ENCODE measurements at regions of chr12 and their contacts with region 1.

Region 1: GRCh38 chr12:15629108-15629507 is 160.1 kb downstream of the EPS8 start:
- DNase-seq: peak; percentile 88 to 95
- H3K4me3 ChIP-seq: no peak overlapping the region
- H3K4me3 Mint-ChIP-seq: peak overlapping the region; percentile 41
- H3K27ac Mint-ChIP-seq: peak overlapping the region; percentile 82
- H3K4me1 ChIP-seq: peaks cover 32% of the 10 kb centered on the region
- H3K4me1 Mint-ChIP-seq: peaks cover 41% of the 10 kb centered on the region
- H3K27me3 ChIP-seq: no peaks in the 10 kb centered on the region
- H3K27me3 Mint-ChIP-seq: no peaks in the 10 kb centered on the region
- CTCF ChIP-seq: no peak

Region 2: GRCh38 chr12:15599266-15600037 is 29.7 kb before region 1 on chr12:
- CTCF ChIA-PET with region 1: no interaction called
- POLR2A ChIA-PET with region 1: no interaction called
- intact Hi-C with region 1: no loop called
- DNase-seq: no peak
- H3K4me3 ChIP-seq: no peak overlapping the region
- H3K4me3 Mint-ChIP-seq: no peak overlapping the region
- H3K27ac Mint-ChIP-seq: no peak overlapping the region
- H3K4me1 ChIP-seq: no peaks in the 10 kb centered on the region
- H3K4me1 Mint-ChIP-seq: peaks cover 6% of the 10 kb centered on the region
- H3K27me3 ChIP-seq: no peaks in the 10 kb centered on the region
- H3K27me3 Mint-ChIP-seq: no peaks in the 10 kb centered on the region
- CTCF ChIP-seq: no peak

Region 3: DNA sequence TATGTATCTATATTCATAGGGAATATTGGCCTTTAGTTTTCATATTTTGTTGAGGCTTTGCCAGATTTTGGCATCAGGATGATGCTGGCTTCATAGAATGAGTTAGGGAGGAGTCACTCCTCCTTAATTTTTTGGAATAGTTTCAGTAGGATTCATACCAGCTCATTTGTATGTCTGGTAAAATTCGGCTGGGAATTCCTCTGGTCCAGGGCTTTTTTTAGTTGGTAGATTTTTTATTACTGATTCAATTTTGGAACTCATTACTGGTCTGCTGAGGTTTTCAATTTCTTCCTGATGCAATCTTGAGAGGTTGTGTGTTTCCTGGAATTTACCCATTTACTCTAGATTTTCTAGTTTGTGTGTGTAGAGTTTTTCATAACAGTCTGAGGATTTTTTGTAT is 15.1 kb before region 1 on chr12:
- CTCF ChIA-PET with region 1: no interaction called
- POLR2A ChIA-PET with region 1: no interaction called
- intact Hi-C with region 1: loop called (anchors 1 kb)
- DNase-seq: no peak
- H3K4me3 ChIP-seq: no peak overlapping the region
- H3K4me3 Mint-ChIP-seq: no peak overlapping the region
- H3K27ac Mint-ChIP-seq: no peak overlapping the region
- H3K4me1 ChIP-seq: no peaks in the 10 kb centered on the region
- H3K4me1 Mint-ChIP-seq: no peaks in the 10 kb centered on the region
- H3K27me3 ChIP-seq: no peaks in the 10 kb centered on the region
- H3K27me3 Mint-ChIP-seq: no peaks in the 10 kb centered on the region
- CTCF ChIP-seq: no peak

Region 4: GRCh38 chr12:15700595-15700994 is 71.5 kb after region 1 on chr12:
- CTCF ChIA-PET with region 1: no interaction called
- POLR2A ChIA-PET with region 1: no interaction called
- intact Hi-C with region 1: no loop called
- DNase-seq: no peak
- H3K4me3 ChIP-seq: no peak overlapping the region
- H3K4me3 Mint-ChIP-seq: no peak overlapping the region
- H3K27ac Mint-ChIP-seq: no peak overlapping the region
- H3K4me1 ChIP-seq: no peaks in the 10 kb centered on the region
- H3K4me1 Mint-ChIP-seq: no peaks in the 10 kb centered on the region
- H3K27me3 ChIP-seq: no peaks in the 10 kb centered on the region
- H3K27me3 Mint-ChIP-seq: no peaks in the 10 kb centered on the region
- CTCF ChIP-seq: no peak

Region 5: GRCh38 chr12:15712823-15713660 is 83.9 kb after region 1 on chr12:
- CTCF ChIA-PET with region 1: no interaction called
- POLR2A ChIA-PET with region 1: no interaction called
- intact Hi-C with region 1: loop called (anchors 2 kb)
- DNase-seq: peak; percentile 53 to 67
- H3K4me3 ChIP-seq: peak overlapping the region; percentile 32
- H3K4me3 Mint-ChIP-seq: peak overlapping the region; percentile 86
- H3K27ac Mint-ChIP-seq: peak overlapping the region; percentile 96
- H3K4me1 ChIP-seq: peaks cover 26% of the 10 kb centered on the region
- H3K4me1 Mint-ChIP-seq: peaks cover 17% of the 10 kb centered on the region
- H3K27me3 ChIP-seq: no peaks in the 10 kb centered on the region
- H3K27me3 Mint-ChIP-seq: no peaks in the 10 kb centered on the region
- CTCF ChIP-seq: no peak

Region 6: GRCh38 chr12:15789220-15790171 is 160.4 kb after region 1 on chr12 and contains the start of gene EPS8:
- CTCF ChIA-PET with region 1: no interaction called
- POLR2A ChIA-PET with region 1: no interaction called
- intact Hi-C with region 1: loop called (anchors 5 kb)
- DNase-seq: peak; percentile 91 to 97
- H3K4me3 ChIP-seq: peak within 1 kb of the TSS; percentile 76
- H3K4me3 Mint-ChIP-seq: peak within 1 kb of the TSS; percentile 75
- H3K27ac Mint-ChIP-seq: peak within 1 kb of the TSS; percentile 62
- H3K4me1 ChIP-seq: 0 out of 2 replicates have a peak, but pooled peaks cover 3% of the 10 kb centered on the region
- H3K4me1 Mint-ChIP-seq: peaks cover 5% of the 10 kb centered on the region
- H3K27me3 ChIP-seq: peaks cover 1% of the 10 kb centered on the region; the same call in 1 of the 2 replicates
- H3K27me3 Mint-ChIP-seq: peaks cover 13% of the 10 kb centered on the region
- CTCF ChIP-seq: no peak
- total RNA-seq, gene EPS8: 13.9 and 20.1 TPM in 2 replicates

Measured in Caco-2 (cell line).